Left ventricle myocardium superior (tissue), 1 donor: ENCODE measurements at regions of chr6 and their contacts with region 1.

Region 1: GRCh38 chr6:142845624-142846458 is 99.1 kb downstream of the HIVEP2 start:
- DNase-seq: peak; percentile 96
- ATAC-seq: peak; percentile 95

Region 2: DNA sequence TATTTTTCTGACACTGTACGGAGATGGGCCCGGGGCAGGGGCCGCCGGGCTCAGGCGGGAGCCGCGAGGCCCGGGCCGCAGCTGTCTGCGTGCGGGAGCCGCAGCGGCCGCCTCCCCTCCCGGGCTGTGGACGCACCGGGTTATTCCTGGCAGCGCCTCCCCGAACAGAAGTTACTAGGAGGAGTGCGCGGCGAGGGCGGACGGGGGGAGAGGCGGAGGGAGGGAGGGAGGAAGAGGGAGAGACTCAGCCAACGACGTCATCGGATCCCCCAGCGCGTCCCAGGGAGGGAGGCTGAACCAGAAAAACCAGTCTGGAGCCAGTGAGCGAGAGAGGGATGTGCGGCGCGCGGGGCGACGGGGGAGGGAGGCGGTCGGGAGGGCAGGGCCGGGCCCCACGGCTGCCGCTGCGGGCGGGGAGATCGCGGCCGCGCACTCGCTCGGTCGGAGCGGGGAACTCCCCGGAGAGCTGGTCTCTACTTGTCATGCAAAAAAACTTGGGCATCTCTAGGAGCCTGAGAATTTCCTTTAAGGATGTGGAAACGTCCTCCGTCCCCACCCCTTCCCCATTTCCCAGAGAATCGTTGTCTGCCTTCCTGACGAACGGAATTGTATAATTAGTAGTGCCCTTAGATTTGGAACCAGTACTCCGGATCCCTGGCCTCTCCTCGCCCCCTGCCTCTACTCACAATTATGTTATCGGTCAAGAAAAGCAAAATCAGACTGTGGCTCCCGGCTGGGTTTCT is 100.5 kb after region 1 on chr6:
- intact Hi-C with region 1: loop called (anchors 10 kb)
- DNase-seq: peak; percentile 97
- ATAC-seq: peak; percentile 87